ENCODE measurements at regions of chr1 and their contacts with region 1.

Region 1: DNA sequence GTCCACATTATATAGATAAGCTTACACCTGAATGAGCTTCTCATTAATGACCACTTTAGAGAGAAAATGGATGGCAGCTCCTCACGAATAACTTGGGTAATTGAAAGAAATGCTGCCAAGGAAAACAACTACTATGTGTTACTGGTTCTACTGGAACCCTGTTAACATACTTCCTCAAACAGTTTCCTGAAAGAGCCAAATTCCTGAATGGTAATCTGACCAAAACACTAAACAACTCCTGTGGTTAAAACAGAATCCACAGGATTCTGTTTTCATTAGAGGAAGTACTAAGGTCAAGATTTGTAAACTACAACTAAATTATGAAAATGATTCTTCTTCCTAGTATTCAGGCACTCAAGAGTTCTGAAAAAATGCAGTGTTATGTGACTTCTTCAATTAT is 107.2 kb downstream of the DNM3 start:
- DNase-seq: peak; percentile 53
- H3K4me3 ChIP-seq: no peak overlapping the region
- CTCF ChIP-seq: no peak

Region 2: GRCh38 chr1:171883849-171884248 is 64.7 kb before region 1 on chr1:
- in situ Hi-C with region 1: loop called (anchors 5 kb)
- DNase-seq: no peak
- H3K4me3 ChIP-seq: no peak overlapping the region
- CTCF ChIP-seq: no peak

Measured in astrocyte of the cerebellum (primary cell).